Vagina (tissue), 2 donors: ENCODE measurements at regions of chr4 and their contacts with region 1.

Region 1: DNA sequence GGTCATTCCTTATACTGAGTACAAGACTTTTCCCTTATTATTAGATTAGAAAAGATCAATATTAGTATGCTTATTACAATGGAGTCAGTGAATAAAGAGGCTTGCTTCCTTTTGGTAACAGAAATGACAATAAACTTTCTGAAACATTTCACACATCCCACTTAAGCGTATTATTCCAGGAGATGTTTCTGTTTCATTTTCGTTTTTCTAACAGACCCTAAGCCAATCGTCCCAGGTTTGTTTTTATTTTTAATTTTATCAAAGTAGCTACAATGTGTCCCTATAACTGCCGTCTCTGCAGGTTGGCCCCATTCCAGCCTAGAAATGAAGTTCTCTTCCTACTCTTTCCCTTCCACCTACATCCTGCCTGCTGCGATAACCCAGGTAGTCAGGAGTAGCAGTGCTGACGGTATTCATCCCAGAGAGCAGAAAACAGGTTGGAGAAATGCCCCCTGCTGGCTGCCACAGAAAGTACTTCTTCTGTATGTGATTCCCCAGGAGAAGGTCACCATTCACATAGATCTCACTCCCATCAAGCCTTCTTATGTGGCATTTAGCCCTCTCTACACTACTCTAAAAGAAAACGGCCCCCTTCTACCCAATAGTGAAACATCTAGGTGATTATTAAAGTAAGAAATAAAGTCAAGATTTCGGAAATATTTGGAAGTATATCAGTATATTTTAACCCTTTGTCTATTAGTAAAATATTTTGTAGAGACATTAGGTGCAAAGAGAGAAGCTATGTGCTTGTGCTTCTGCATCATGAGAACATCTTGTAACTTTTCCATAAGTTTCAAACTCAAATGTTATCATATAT is 40.4 kb downstream of the ENPEP start:
- DNase-seq: no peak
- H3K4me3 ChIP-seq: peak overlapping the region; percentile 27 to 39
- H3K27ac ChIP-seq: peak overlapping the region; percentile 14
- H3K4me1 ChIP-seq: no peaks in the 10 kb centered on the region
- H3K27me3 ChIP-seq: no peaks in the 10 kb centered on the region
- CTCF ChIP-seq: peak; percentile 9 to 54 (median 32)
- POLR2A ChIP-seq: no peak

Region 2: DNA sequence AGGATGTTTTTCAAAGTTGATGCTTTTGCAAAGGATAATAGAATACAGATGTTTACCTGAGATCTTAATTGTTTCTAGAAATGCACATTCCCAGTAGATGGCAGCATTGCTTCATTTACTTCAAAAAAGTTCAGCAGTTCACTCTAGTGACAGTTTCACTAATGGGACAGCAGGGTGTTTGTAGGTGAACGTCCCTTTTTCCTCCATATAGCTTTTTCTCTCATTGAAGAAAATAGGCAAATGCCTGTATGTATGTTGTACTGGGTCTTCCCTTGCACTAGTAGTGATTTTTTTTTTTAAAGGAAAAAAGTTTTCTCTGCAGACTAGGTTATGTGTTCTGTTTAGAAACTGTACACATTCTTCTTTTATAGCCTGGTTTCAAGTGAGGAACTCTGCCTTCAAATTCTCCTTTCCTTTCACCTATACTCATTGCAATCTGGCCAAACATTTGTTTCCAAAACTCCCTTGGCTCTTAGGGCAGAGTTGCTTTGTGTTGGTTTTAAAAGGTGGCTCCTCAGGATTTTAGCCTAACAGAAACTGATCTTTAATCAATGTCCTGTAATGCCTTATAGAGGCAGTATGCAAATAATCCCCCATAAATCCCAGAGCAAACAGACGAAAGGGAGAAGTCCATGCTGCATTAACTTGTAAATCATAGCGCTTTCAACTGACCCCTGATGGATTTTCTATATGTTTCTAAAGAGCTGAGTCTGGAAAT is 517.3 kb before region 1 on chr4:
- intact Hi-C with region 1: loop called (anchors 5 kb)
- DNase-seq: no peak
- H3K4me3 ChIP-seq: no peak overlapping the region
- H3K27ac ChIP-seq: no peak overlapping the region
- H3K4me1 ChIP-seq: peaks cover 3% of the 10 kb centered on the region
- H3K27me3 ChIP-seq: no peaks in the 10 kb centered on the region
- CTCF ChIP-seq: peak; percentile 47 to 60 (median 57)
- POLR2A ChIP-seq: no peak

Region 3: DNA sequence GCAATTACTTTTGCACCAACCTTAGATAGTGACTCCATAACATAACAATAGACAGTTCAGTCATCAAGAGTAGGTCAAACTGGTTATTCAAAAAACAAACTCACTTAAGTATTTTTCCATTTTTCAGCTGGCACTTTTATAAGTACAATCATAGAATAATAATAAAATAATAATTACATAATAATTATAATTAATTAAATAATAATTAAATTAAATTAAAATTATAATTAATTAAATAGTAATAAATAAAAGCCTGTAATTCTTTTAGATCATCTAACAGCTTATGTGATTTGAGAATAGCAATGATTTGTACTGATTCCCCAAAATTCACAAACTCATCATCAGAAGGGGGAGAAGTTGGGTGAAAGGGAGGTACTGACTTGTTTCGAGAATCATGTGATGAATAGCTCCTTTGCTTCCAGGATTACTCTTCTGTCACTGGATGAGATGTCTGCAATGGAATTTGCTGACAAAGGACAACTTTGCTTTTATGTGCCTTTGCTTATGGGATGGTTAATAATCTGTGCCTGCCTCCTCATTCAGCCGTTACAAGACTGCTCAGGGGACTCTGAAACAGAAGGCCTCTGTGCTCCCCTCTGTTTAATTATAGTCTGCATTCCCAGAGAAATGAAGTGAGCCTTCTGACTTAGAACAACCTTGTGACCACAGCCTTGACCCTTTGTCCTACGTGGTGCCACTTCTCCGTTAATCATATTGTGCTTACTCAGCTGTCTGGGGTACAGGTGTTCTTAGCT is 145.1 kb before region 1 on chr4:
- intact Hi-C with region 1: no loop called
- DNase-seq: no peak
- H3K4me3 ChIP-seq: no peak overlapping the region
- H3K27ac ChIP-seq: no peak overlapping the region
- H3K4me1 ChIP-seq: no peaks in the 10 kb centered on the region
- H3K27me3 ChIP-seq: no peaks in the 10 kb centered on the region
- CTCF ChIP-seq: no peak
- POLR2A ChIP-seq: no peak

Region 4: DNA sequence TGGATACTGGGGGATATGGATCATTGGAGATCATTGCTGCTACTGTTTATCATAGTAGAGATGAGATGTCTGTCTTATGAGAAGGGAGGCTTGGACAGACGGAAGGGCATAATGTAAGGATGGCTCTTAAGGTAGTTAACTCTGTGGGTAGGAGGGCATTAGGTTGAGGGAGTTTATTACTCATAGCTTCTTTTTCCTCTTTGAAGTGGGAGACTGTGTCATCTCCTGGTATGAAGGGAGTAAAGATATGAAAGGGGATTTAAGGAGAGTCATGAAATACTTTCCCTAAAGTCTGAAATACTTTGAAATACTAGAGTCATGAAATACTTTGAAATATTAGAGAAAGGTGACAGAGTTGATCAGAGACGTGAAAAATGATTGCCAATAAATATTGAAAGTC is 362.1 kb after region 1 on chr4:
- intact Hi-C with region 1: no loop called
- DNase-seq: no peak
- H3K4me3 ChIP-seq: no peak overlapping the region
- H3K27ac ChIP-seq: no peak overlapping the region
- H3K4me1 ChIP-seq: no peaks in the 10 kb centered on the region
- H3K27me3 ChIP-seq: no peaks in the 10 kb centered on the region
- CTCF ChIP-seq: no peak
- POLR2A ChIP-seq: no peak